Activated T-helper 1 cell treated with anti-CD3 and anti-CD28 coated beads, Interleukin-12 subunit alpha, Interleukin-12 subunit beta, Interleukin-2, Interleukin-4 antibody, amounts not matched to agents 30 ng/mL and 10 ng/mL and 1 ng/mL, durations not matched to agents 14 hours and 24 hours and 36 hours (primary cell): ENCODE measurements at regions of chr5 and their contacts with region 1.

Region 1: GRCh38 chr5:143824851-143825720 is 13.1 kb downstream of the HMHB1 start:
- DNase-seq: peak; percentile 73
- H3K4me3 Mint-ChIP-seq: no peak overlapping the region
- H3K27ac Mint-ChIP-seq: no peak overlapping the region
- H3K4me1 Mint-ChIP-seq: peaks cover 14% of the 10 kb centered on the region
- H3K27me3 Mint-ChIP-seq: peaks cover 1% of the 10 kb centered on the region

Region 2: DNA sequence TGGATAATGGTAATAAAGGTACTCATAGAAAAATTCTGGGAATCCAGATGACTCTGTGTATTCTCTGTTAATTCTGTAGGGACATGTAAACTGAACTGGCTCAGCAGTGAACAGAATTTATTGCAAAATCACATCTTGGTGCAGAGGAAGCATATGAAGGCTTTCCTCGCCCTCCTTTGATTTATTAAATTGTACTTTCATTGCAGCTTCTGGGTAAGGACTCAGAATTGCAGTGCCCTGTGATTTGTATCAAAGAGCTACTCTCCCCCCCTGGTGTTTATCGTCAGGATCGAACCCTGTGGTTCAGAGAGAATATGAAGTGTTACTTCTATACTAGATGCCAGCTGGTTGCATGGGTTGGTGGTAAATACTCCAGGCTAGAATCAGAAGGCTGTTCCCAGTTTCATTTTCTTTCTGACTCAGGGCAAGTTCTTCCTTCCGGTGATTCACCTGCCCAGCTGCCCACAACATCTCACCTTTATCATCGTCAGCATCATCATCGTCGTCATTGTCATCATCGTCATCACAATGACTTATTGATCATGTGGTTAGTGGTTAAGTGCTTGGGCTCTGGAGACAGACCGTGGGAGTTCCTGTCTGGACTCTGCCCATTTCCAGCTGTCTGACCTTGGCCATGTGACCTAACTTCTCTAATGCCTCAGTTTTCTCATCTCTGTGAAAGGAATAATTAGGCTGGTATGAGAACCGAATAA is 816.1 kb before region 1 on chr5:
- intact Hi-C with region 1: loop called (anchors 1 kb)
- DNase-seq: peak; percentile 82
- H3K4me3 Mint-ChIP-seq: peak overlapping the region; percentile 24
- H3K27ac Mint-ChIP-seq: peak overlapping the region; percentile 86
- H3K4me1 Mint-ChIP-seq: peaks cover 79% of the 10 kb centered on the region
- H3K27me3 Mint-ChIP-seq: no peaks in the 10 kb centered on the region

Region 3: GRCh38 chr5:143222287-143223231 is 602.5 kb before region 1 on chr5:
- intact Hi-C with region 1: loop called (anchors 5 kb)
- DNase-seq: peak; percentile 59
- H3K4me3 Mint-ChIP-seq: peak overlapping the region; percentile 60
- H3K27ac Mint-ChIP-seq: peak overlapping the region; percentile 92
- H3K4me1 Mint-ChIP-seq: peaks cover 77% of the 10 kb centered on the region
- H3K27me3 Mint-ChIP-seq: no peaks in the 10 kb centered on the region

Region 4: GRCh38 chr5:143395638-143396352 is 429.3 kb before region 1 on chr5:
- intact Hi-C with region 1: no loop called
- DNase-seq: no peak
- H3K4me3 Mint-ChIP-seq: peak overlapping the region; percentile 72
- H3K27ac Mint-ChIP-seq: no peak overlapping the region
- H3K4me1 Mint-ChIP-seq: peaks cover 81% of the 10 kb centered on the region
- H3K27me3 Mint-ChIP-seq: no peaks in the 10 kb centered on the region

Region 5: DNA sequence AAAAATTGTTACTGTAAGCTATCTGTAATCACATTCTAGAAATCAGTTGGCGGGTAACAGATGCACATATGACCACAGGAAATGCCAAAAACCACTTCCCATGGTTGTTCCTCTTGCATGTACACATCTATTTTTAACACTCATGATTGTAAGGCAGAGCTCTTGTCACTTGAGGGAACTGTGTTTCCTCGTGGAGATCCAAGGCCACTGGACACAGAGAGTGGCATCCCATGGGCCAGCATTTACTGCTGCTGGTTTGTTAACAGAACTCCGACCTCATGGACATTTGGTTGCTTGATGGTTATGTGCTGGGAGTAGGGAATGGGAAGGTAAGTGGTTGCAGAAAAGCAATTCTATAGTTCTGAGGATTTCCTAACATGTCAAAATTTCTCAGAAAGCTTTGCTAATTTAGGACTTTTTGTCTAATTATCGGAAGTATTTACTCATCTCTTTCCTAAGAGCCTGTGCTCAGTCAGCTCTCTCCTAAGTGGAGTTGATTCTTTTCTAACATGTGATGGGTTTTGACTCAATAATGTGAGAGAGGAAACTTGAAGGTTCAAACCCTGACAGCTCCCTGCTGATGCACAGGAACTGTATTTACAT is 219.6 kb before region 1 on chr5:
- intact Hi-C with region 1: loop called (anchors 1 kb)
- DNase-seq: peak; percentile 25
- H3K4me3 Mint-ChIP-seq: peak overlapping the region; percentile 56
- H3K27ac Mint-ChIP-seq: peak overlapping the region; percentile 91
- H3K4me1 Mint-ChIP-seq: peaks cover 38% of the 10 kb centered on the region
- H3K27me3 Mint-ChIP-seq: no peaks in the 10 kb centered on the region

Region 6: GRCh38 chr5:143896966-143897365 is 71.9 kb after region 1 on chr5:
- intact Hi-C with region 1: loop called (anchors 1 kb)
- DNase-seq: no peak
- H3K4me3 Mint-ChIP-seq: no peak overlapping the region
- H3K27ac Mint-ChIP-seq: peak overlapping the region; percentile 50
- H3K4me1 Mint-ChIP-seq: peaks cover 34% of the 10 kb centered on the region
- H3K27me3 Mint-ChIP-seq: no peaks in the 10 kb centered on the region

Region 7: DNA sequence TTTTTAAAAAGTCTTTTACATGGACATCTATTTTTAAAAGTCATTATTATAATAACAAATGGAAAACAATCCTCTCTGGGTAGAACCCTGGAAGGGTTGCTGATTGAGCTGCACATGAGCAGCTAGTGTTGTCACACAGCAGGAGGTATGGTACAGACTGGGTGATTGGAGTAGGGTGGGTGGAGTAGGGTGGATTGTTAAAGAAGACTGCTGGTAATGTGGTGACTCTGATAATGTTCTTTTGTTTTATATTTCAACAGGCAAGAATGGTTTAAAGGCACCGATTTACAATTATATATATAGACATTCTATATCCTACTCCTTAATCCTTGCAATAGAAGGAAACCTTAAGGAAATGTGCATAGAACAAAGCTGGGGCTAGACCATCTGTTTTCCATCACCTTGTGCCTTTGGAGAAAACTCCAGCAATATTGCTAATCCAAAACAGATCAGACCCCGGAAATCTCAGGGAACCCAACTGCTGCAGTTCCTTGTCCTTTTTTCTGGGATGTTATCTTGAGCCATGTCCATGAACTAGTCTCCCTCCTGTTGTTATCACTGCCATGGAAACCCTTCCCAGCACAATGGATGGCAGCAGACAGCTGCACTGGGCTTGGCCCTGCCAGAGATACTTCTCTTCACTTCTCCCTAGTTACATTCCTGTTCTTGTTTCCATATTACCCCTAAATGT is 215.7 kb after region 1 on chr5:
- intact Hi-C with region 1: no loop called
- DNase-seq: no peak
- H3K4me3 Mint-ChIP-seq: no peak overlapping the region
- H3K27ac Mint-ChIP-seq: no peak overlapping the region
- H3K4me1 Mint-ChIP-seq: no peaks in the 10 kb centered on the region
- H3K27me3 Mint-ChIP-seq: no peaks in the 10 kb centered on the region